ENCODE measurements at regions of chr1 and their contacts with region 1.

Region 1: GRCh38 chr1:241640029-241640818 is at the starts of genes CHML and OPN3:
- DNase-seq: peak; percentile 92
- ATAC-seq: peak; percentile 96
- H3K4me3 Mint-ChIP-seq: peak within 1 kb of the TSS; percentile 84
- H3K27ac Mint-ChIP-seq: peak within 1 kb of the TSS; percentile 88
- H3K4me1 Mint-ChIP-seq: peaks cover 38% of the 10 kb centered on the region
- H3K27me3 Mint-ChIP-seq: no peaks in the 10 kb centered on the region
- total RNA-seq, gene CHML: 18.2 to 18.7 TPM
- total RNA-seq, gene OPN3: 15.2 to 15.9 TPM

Region 2: DNA sequence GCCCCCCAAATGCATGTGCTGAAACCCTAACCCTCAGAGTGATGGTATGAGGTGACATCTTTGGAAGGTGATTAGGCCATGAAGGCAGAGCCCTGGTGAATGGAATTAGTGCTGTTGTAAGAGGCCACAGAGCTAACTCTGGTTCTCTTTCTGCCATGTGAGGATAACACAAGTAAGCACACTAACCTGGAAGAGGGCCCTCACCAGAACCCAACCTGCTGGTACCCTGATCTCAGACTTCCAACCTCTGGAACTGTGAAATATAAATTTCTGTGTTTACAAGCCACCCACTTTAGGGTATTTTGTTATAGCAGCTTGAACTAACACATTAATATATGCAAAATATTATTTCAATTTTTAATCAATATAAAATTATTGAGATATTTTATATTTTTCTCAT is 19.9 kb before region 1 on chr1:
- CTCF ChIA-PET with region 1: no interaction called
- POLR2A ChIA-PET with region 1: no interaction called
- DNase-seq: no peak
- ATAC-seq: no peak
- H3K4me3 Mint-ChIP-seq: no peak overlapping the region
- H3K27ac Mint-ChIP-seq: no peak overlapping the region
- H3K4me1 Mint-ChIP-seq: no peaks in the 10 kb centered on the region
- H3K27me3 Mint-ChIP-seq: no peaks in the 10 kb centered on the region

Region 3: GRCh38 chr1:241847796-241848685 is 207.8 kb after region 1 on chr1 and contains the start of gene EXO1:
- CTCF ChIA-PET with region 1: interaction called, 4 read pairs
- POLR2A ChIA-PET with region 1: interaction called, 12 read pairs
- DNase-seq: peak; percentile 93
- ATAC-seq: peak; percentile 97
- H3K4me3 Mint-ChIP-seq: peak within 1 kb of the TSS; percentile 96
- H3K27ac Mint-ChIP-seq: peak within 1 kb of the TSS; percentile 100
- H3K4me1 Mint-ChIP-seq: peaks cover 32% of the 10 kb centered on the region
- H3K27me3 Mint-ChIP-seq: peaks cover 3% of the 10 kb centered on the region
- total RNA-seq, gene EXO1: 48.2 to 50.0 TPM

Measured in activated CD8-positive, alpha-beta T cell treated with anti-CD3 and anti-CD28 coated beads, Interleukin-2, amount 10 ng/mL, durations not matched to agents 7 days and 5 days (primary cell).